ENCODE measurements at regions of chr9 and their contacts with region 1.

Region 1: GRCh38 chr9:98775831-98776441 is 20.4 kb downstream of the ANKS6 start:
- DNase-seq: peak in 1 of 2 donors; percentile 63
- H3K4me3 ChIP-seq: no peak overlapping the region
- H3K27ac ChIP-seq: no peak overlapping the region
- H3K4me1 ChIP-seq: no peaks in the 10 kb centered on the region
- H3K27me3 ChIP-seq: no peaks in the 10 kb centered on the region
- CTCF ChIP-seq: peak; percentile 27 to 59 (median 47)

Region 2: DNA sequence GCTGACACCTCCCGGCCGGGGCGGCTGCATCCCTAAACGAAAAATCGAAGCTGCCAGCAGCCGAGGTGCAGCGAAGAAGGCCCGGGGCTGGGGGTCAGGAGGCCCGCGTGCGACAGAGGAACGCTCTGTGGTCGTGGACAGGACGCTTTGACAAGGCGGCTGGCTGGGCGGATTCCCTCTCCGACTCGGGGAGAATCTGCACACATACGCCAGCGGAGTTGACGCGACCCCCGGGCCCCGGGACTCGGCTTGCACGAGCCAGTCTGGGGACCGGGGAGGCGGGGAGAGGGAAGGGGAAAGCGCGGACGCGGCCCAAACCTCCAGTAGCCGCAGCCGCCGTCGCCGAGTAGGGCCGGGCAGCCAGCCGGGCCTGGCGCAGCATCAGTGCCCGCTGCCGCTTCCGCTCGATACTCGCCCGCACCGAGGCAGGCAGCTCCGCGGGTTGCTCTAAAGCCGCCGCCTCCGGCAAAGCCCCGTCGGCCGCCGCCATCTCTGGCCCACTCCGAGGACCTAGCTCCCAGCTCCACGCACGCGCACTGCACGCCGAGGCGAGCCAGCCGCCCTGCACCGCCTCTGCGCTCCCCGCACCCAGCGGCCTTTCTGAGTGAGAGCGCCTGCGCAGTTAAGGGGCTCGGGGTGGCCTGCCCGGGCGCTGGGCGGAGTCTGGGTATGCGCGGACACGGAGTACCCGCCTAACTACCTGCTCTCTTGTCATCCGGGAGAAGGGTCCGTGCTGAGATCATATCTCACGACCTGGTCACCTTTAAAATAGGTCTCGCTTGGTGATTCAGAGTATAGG is 1078.9 kb before region 1 on chr9 and contains the start of gene XPA:
- intact Hi-C with region 1: no loop called
- DNase-seq: peak; percentile 80 to 98
- H3K4me3 ChIP-seq: peak within 1 kb of the TSS; percentile 73 to 81
- H3K27ac ChIP-seq: peak within 1 kb of the TSS; percentile 93 to 96
- H3K4me1 ChIP-seq: peaks cover 0 to 25% of the 10 kb centered on the region in 2 donors
- H3K27me3 ChIP-seq: no peaks in the 10 kb centered on the region
- CTCF ChIP-seq: no peak
- total RNA-seq, gene XPA: 3.2 TPM

Region 3: GRCh38 chr9:98315551-98316060 is 460.3 kb before region 1 on chr9:
- intact Hi-C with region 1: loop called (anchors 5 kb)
- DNase-seq: peak in 1 of 2 donors; percentile 79
- H3K4me3 ChIP-seq: no peak overlapping the region
- H3K27ac ChIP-seq: no peak overlapping the region
- H3K4me1 ChIP-seq: no peaks in the 10 kb centered on the region
- H3K27me3 ChIP-seq: no peaks in the 10 kb centered on the region
- CTCF ChIP-seq: peak; percentile 65 to 84 (median 71)

Region 4: GRCh38 chr9:98558575-98558974 is 217.4 kb before region 1 on chr9:
- intact Hi-C with region 1: no loop called
- DNase-seq: peak in 1 of 2 donors; percentile 50
- H3K4me3 ChIP-seq: no peak overlapping the region
- H3K27ac ChIP-seq: no peak overlapping the region
- H3K4me1 ChIP-seq: no peaks in the 10 kb centered on the region
- H3K27me3 ChIP-seq: no peaks in the 10 kb centered on the region
- CTCF ChIP-seq: no peak

Measured in ascending aorta (tissue), 2 donors.